A549 (cell line): ENCODE measurements at regions of chr19 and their contacts with region 1.

Region 1: GRCh38 chr19:2475702-2476450 is at the start of gene GADD45B:
- DNase-seq: peak; percentile 94 to 96
- ATAC-seq: peak; percentile 41 to 65
- H3K4me3 ChIP-seq: peak within 1 kb of the TSS; percentile 95
- H3K27ac ChIP-seq: peak within 1 kb of the TSS; percentile 93 to 99
- H3K4me1 ChIP-seq: peaks cover 9% of the 10 kb centered on the region
- CTCF ChIP-seq: no peak
- EP300 ChIP-seq: no peak
- POLR2A ChIP-seq: peak; percentile 100
- RAD21 ChIP-seq: peak in 1 of 2 experiments; percentile 24; a peak in 2 of 5 replicates
- polyA plus RNA-seq, gene GADD45B: 65.3 and 72.5 TPM in 2 replicates

Region 2: GRCh38 chr19:2371656-2372055 is 104.2 kb before region 1 on chr19:
- CTCF ChIA-PET with region 1: no interaction called
- POLR2A ChIA-PET with region 1: no interaction called
- DNase-seq: no peak
- ATAC-seq: peak in 1 of 2 experiments; percentile 44; a peak in 1 of 6 replicates
- H3K4me3 ChIP-seq: no peak overlapping the region
- H3K27ac ChIP-seq: no peak overlapping the region
- H3K4me1 ChIP-seq: no peaks in the 10 kb centered on the region
- CTCF ChIP-seq: no peak
- EP300 ChIP-seq: no peak
- POLR2A ChIP-seq: no peak
- RAD21 ChIP-seq: no peak

Region 3: GRCh38 chr19:2455851-2456570 is 19.9 kb before region 1 on chr19:
- CTCF ChIA-PET with region 1: interaction called, 7 read pairs
- POLR2A ChIA-PET with region 1: interaction called, 44 read pairs
- DNase-seq: no peak
- ATAC-seq: peak; percentile 42 to 49; a peak in 2 of 6 replicates
- H3K4me3 ChIP-seq: peak overlapping the region; percentile 98
- H3K27ac ChIP-seq: peak overlapping the region; percentile 95 to 100
- H3K4me1 ChIP-seq: peaks cover 16% of the 10 kb centered on the region; the same call in 1 of the 3 replicates
- CTCF ChIP-seq: no peak
- EP300 ChIP-seq: no peak
- POLR2A ChIP-seq: no peak
- RAD21 ChIP-seq: no peak

Region 4: GRCh38 chr19:2507109-2507508 is 31.2 kb after region 1 on chr19:
- CTCF ChIA-PET with region 1: interaction called, 5 read pairs
- POLR2A ChIA-PET with region 1: interaction called, 21 read pairs
- DNase-seq: peak; percentile 52 to 95
- ATAC-seq: peak; percentile 90 to 92
- H3K4me3 ChIP-seq: 0 out of 3 replicates have a peak overlapping the region, but pooled peaks have one; percentile 10
- H3K27ac ChIP-seq: peak overlapping the region; percentile 78 to 87
- H3K4me1 ChIP-seq: peaks cover 30% of the 10 kb centered on the region
- CTCF ChIP-seq: no peak
- EP300 ChIP-seq: peak; percentile 52 to 71; a peak in 2 of 5 replicates
- POLR2A ChIP-seq: no peak
- RAD21 ChIP-seq: no peak

Region 5: DNA sequence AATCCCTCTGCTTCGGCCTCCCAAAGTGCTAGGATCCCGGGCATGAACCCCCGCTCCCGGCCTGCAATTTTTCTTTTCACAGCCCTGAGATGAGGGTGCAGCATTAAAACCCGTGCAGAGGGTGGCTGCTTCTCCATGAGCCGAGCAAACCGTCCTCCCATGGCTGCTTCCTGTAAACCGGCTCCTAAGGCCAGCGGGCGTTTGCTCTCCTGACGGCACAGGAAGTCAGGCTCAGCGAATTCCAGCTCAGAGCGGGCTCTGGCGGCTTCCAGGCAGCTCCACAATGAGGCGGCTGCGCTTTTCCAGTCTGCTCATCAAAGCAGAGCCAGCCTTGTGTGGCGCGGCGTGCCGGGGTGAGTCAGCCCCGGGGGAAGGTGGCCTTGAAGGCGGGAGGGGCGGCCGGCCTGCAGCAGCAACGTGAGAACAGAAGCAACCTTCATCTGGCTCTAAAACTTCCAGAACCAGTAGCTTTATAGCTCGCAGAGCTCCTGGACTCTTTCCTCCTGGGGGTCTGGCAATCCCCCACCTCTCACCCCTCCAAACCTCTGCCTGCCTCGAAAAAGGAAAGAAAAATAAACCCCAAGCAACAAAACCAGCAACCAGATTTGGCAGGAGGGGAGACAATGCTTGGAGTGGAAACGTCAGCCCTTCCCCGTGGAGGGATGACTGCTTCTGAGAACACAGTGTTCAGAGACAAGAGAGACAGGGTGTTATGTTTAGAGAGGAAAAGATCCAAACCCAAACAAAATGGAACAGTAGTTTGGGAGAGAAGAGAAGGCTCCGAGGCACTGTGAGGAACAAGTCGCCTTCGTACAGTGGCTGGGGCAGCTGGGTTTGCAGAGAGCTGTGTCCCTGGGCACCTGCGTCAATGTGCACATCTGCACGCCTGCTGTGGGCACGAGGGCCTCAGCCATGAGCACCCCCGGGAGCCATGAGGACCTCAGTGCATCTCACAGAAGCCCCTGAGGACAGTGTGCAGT is 67.9 kb after region 1 on chr19:
- CTCF ChIA-PET with region 1: interaction called, 8 read pairs
- POLR2A ChIA-PET with region 1: interaction called, 191 read pairs
- DNase-seq: peak; percentile 73 to 93
- ATAC-seq: peak; percentile 81 to 82
- H3K4me3 ChIP-seq: peak overlapping the region; percentile 33; the same call in 2 of the 3 replicates
- H3K27ac ChIP-seq: peak overlapping the region; percentile 97 to 100
- H3K4me1 ChIP-seq: peaks cover 64% of the 10 kb centered on the region
- CTCF ChIP-seq: no peak
- EP300 ChIP-seq: peak in 1 of 2 experiments; percentile 37; a peak in 1 of 5 replicates
- POLR2A ChIP-seq: no peak
- RAD21 ChIP-seq: peak; percentile 39 to 58

Region 6: GRCh38 chr19:2588081-2588777 is 112.4 kb after region 1 on chr19:
- CTCF ChIA-PET with region 1: interaction called, 3 read pairs
- POLR2A ChIA-PET with region 1: interaction called, 13 read pairs
- DNase-seq: peak; percentile 43 to 76
- ATAC-seq: peak; percentile 65 to 79; a peak in 5 of 6 replicates
- H3K4me3 ChIP-seq: peak overlapping the region; percentile 21; the same call in 2 of the 3 replicates
- H3K27ac ChIP-seq: peak overlapping the region; percentile 70 to 79
- H3K4me1 ChIP-seq: peaks cover 38% of the 10 kb centered on the region
- CTCF ChIP-seq: no peak
- EP300 ChIP-seq: 0 out of 5 replicates have a peak, but pooled peaks of 1 of the 2 experiments have one; percentile 32
- POLR2A ChIP-seq: no peak
- RAD21 ChIP-seq: no peak

Region 7: GRCh38 chr19:2618611-2619010 is 142.7 kb after region 1 on chr19:
- CTCF ChIA-PET with region 1: interaction called, 156 read pairs
- POLR2A ChIA-PET with region 1: interaction called, 15 read pairs
- DNase-seq: no peak
- ATAC-seq: peak in 1 of 2 experiments; percentile 53; a peak in 2 of 6 replicates
- H3K4me3 ChIP-seq: no peak overlapping the region
- H3K27ac ChIP-seq: peak overlapping the region in 1 of 2 experiments; percentile 28; a peak in 1 of 6 replicates
- H3K4me1 ChIP-seq: peaks cover 5% of the 10 kb centered on the region
- CTCF ChIP-seq: no peak
- EP300 ChIP-seq: no peak
- POLR2A ChIP-seq: no peak
- RAD21 ChIP-seq: no peak